GM10248 (cell line): ENCODE measurements at regions of chr11 and their contacts with region 1.

Region 1: DNA sequence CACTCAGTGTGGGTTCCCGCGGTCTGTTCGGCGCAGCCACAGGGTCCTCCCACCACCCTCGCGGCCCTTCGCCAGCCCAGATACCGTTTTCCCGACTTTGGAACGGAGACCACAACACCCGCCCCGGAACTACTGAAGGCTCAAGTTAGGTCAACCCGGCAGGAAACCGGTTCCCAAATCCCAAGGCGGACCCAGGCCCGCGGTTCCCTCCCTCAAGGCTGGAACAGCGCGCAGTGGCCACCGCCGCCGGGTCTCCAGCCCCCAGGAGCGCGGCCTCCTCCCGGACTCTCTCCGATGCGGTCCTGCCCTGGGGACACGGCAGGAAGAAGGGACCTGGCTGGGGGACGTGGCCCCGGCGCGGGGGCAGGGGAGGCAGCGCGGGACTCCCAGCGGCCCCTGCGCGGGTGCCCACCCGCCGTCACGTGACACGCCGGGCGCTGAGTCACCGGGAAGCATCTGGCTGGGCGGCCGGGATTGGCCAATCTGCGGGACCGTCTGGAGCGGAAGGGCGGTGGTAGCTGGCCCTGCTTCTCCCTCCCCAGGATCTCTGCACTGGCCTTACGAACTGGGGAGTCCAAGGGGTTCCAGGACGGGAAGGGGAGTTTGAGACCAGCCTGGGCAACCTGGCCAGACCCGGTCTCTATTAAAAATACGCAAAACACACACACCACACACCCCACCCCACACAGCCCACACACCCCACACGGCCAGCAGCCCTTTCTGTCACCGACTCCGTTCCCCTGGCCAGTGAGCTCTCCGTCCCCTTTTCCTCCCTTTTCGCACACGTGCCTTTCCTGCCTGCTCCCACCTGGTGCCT is 21.5 kb upstream of the MALAT1 start:
- DNase-seq: peak; percentile 93
- CTCF ChIP-seq: no peak

Region 2: GRCh38 chr11:65459552-65459951 is 17.8 kb before region 1 on chr11:
- CTCF ChIA-PET with region 1: interaction called, 65 read pairs
- POLR2A ChIA-PET with region 1: interaction called, 9 read pairs
- DNase-seq: peak; percentile 37
- CTCF ChIP-seq: no peak

Region 3: DNA sequence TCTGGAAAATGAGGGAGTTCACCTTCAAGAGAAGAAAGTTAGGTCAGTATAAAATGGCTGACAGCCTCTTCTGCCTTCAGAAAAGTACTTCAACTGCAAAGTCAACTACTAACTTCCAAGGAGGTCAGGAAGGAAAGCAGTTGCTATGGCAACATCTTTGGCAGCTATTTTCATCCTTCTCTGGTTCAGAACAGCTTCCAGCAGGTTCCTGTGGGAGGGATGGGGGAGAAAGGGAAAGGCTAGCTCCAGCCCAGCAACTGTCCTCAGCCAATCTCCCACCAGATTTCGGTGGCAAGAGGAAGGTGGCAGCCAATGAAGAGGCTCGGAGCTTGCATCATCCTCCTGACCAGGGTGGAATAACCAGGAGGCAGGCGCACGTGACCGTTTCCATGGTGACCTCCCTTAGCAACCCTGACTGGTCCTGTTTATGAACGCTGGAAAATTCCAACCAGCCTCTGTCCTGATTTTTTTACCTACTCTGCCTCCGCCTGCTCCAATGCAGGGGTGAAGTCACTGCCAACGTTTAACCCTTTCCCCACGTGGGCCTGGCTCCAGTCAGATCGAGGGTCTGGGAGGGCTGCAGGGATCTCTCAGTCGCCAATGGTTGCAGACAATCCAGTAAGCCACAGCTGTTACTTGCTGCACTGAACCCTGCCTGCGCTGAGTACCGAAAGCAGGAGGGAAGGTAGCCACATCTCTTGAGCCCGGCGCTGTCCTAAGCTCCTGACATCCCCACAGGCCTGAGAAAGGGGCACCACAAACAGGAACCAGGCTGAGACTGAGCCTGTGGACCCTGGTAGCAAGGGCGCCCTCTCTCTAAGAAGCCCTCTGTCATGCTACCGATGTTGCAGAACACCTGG is 10.3 kb after region 1 on chr11:
- CTCF ChIA-PET with region 1: interaction called, 117 read pairs
- POLR2A ChIA-PET with region 1: interaction called, 22 read pairs
- DNase-seq: peak; percentile 78
- CTCF ChIP-seq: no peak

Region 4: GRCh38 chr11:65497141-65498041 is 20.0 kb after region 1 on chr11:
- CTCF ChIA-PET with region 1: interaction called, 117 read pairs
- POLR2A ChIA-PET with region 1: interaction called, 305 read pairs
- DNase-seq: peak; percentile 87
- CTCF ChIP-seq: no peak